PC-9 (cell line): ENCODE measurements at regions of chrX and their contacts with region 1.

Region 1: GRCh38 chrX:85544609-85545008 is 165.1 kb upstream of the POF1B start:
- DNase-seq: no peak
- H3K4me3 ChIP-seq: no peak overlapping the region
- H3K27ac ChIP-seq: no peak overlapping the region
- H3K4me1 ChIP-seq: no peaks in the 10 kb centered on the region
- H3K27me3 ChIP-seq: no peaks in the 10 kb centered on the region
- CTCF ChIP-seq: peak; percentile 59

Region 2: GRCh38 chrX:85084770-85085393 is 459.7 kb before region 1 on chrX:
- CTCF ChIA-PET with region 1: no interaction called
- POLR2A ChIA-PET with region 1: no interaction called
- intact Hi-C with region 1: loop called (anchors 10 kb)
- DNase-seq: peak in 1 of 2 experiments; percentile 4
- H3K4me3 ChIP-seq: no peak overlapping the region
- H3K27ac ChIP-seq: no peak overlapping the region
- H3K4me1 ChIP-seq: no peaks in the 10 kb centered on the region
- H3K27me3 ChIP-seq: no peaks in the 10 kb centered on the region
- CTCF ChIP-seq: peak; percentile 72

Region 3: DNA sequence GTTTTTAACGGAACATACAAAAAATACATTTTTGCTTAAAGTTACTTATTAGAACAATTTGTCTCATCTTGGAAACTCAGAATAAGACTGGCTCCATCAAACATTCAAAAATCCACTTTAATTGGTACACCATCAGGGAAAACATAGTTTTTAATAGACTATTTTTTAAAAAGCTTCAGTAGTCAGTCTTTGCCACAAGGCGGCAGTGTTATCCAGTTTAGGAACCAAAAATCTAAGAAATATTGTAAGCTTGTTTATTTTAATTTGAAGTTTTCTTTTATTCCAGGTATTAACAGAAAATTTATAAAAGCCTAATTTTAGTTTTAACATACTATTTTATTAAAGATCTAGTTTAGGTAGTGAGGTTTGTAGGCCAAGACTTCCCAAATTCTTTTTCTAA is 433.3 kb before region 1 on chrX:
- CTCF ChIA-PET with region 1: no interaction called
- POLR2A ChIA-PET with region 1: no interaction called
- intact Hi-C with region 1: loop called (anchors 5 kb)
- DNase-seq: no peak
- H3K4me3 ChIP-seq: no peak overlapping the region
- H3K27ac ChIP-seq: no peak overlapping the region
- H3K4me1 ChIP-seq: no peaks in the 10 kb centered on the region
- H3K27me3 ChIP-seq: no peaks in the 10 kb centered on the region
- CTCF ChIP-seq: peak; percentile 76

Region 4: DNA sequence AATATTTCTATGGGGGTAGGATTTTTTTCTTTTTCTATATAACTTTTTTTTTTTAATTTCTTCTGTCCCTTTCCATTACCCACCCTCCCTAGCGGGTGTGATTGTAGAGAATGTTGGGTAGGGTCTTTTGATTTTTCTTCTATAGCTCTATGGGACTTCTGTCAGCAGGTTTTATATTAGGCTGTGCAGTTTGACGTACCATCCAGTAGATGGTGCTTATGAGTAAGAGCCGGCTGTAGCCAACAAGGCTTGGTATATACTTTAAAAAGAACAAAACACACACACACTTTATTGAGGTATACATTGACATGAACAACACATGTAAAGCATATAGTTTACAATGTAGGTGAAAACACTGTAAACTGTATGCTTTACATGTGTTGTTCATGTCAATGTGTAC is 82.8 kb after region 1 on chrX:
- CTCF ChIA-PET with region 1: no interaction called
- POLR2A ChIA-PET with region 1: no interaction called
- intact Hi-C with region 1: no loop called
- DNase-seq: no peak
- H3K4me3 ChIP-seq: no peak overlapping the region
- H3K27ac ChIP-seq: no peak overlapping the region
- H3K4me1 ChIP-seq: no peaks in the 10 kb centered on the region
- H3K27me3 ChIP-seq: no peaks in the 10 kb centered on the region
- CTCF ChIP-seq: peak; percentile 66